ENCODE measurements at regions of chr15 and their contacts with region 1.

Region 1: DNA sequence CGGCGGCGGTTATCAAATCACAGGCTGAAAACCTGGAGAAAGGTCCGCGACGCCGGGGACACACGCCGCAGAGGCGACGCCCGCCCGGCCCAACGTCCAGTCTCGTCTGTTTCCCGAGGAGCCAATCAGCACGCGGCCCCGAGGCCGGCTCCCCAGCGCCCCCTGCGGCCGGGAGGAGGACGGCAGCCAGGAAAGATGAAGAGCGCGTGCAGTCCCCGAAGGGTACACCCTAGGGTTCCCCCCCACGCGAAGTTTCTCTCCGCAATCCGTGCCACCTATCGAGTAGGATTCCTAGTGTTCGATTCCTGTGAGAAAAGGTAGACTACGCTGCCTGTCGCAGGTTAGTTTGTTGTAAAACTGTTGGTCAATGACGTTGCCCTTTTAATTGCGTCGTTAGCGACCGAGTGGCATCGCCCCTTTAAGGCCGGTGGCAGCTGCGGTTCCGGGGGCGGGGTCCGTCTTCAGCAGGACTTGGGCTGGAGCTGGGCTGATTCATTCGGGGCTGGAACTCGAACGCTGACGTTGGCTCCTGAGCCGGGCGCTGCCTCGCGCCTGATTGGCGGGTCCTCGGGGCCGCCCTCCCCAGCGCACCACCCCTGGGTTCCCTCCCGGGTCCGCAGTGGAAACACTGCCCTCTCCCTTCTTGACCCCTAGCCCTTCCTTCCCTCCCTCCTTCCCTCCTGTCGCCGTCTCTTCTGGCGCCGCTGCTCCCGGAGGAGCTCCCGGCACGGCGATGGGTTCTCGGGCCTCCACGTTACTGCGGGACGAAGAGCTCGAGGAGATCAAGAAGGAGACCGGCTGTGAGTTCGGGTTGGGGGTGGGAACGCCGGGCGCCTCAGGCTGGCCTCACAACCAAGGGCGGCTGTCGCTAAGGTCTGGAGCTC is at the starts of genes CHP1 and EXD1:
- DNase-seq: peak; percentile 93
- ATAC-seq: peak; percentile 98
- H3K4me3 Mint-ChIP-seq: peak within 1 kb of the TSS; percentile 91
- H3K27ac Mint-ChIP-seq: peak within 1 kb of the TSS; percentile 81
- H3K4me1 Mint-ChIP-seq: peaks cover 28% of the 10 kb centered on the region
- H3K27me3 Mint-ChIP-seq: no peaks in the 10 kb centered on the region
- CTCF ChIP-seq: peak; percentile 99
- total RNA-seq, gene CHP1: 47.9 and 58.5 TPM in 2 replicates
- total RNA-seq, gene EXD1: not detected in 2 replicates

Region 2: DNA sequence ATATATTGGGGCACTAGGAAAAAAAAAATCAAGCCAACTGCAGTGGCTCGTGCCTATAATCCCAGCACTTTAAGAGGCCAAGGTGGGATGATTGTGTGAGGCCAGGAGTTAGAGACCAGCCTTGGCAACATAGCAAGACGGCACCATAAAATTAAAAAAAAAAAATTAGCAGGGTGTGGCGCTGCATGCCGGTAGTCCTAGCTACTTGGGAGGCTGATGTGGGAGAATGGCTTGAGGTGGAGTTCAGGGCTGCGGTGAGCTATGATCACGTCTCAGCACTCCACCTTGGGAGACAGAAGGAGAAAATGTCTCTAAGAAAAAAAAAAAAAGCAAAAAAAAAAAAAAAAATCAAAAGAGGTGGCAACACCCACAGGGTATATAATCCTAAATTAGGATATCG is 164.4 kb before region 1 on chr15:
- CTCF ChIA-PET with region 1: no interaction called
- POLR2A ChIA-PET with region 1: interaction called, 11 read pairs
- intact Hi-C with region 1: no loop called
- DNase-seq: no peak
- ATAC-seq: no peak
- H3K4me3 Mint-ChIP-seq: no peak overlapping the region
- H3K27ac Mint-ChIP-seq: no peak overlapping the region
- H3K4me1 Mint-ChIP-seq: no peaks in the 10 kb centered on the region
- H3K27me3 Mint-ChIP-seq: no peaks in the 10 kb centered on the region
- CTCF ChIP-seq: no peak

Region 3: GRCh38 chr15:41283653-41284426 is 52.9 kb after region 1 on chr15:
- CTCF ChIA-PET with region 1: interaction called, 6 read pairs
- POLR2A ChIA-PET with region 1: interaction called, 30 read pairs
- intact Hi-C with region 1: loop called (anchors 1 kb)
- DNase-seq: peak; percentile 94
- ATAC-seq: peak; percentile 98
- H3K4me3 Mint-ChIP-seq: peak overlapping the region; percentile 93
- H3K27ac Mint-ChIP-seq: peak overlapping the region; percentile 94
- H3K4me1 Mint-ChIP-seq: peaks cover 42% of the 10 kb centered on the region
- H3K27me3 Mint-ChIP-seq: no peaks in the 10 kb centered on the region
- CTCF ChIP-seq: no peak

Region 4: DNA sequence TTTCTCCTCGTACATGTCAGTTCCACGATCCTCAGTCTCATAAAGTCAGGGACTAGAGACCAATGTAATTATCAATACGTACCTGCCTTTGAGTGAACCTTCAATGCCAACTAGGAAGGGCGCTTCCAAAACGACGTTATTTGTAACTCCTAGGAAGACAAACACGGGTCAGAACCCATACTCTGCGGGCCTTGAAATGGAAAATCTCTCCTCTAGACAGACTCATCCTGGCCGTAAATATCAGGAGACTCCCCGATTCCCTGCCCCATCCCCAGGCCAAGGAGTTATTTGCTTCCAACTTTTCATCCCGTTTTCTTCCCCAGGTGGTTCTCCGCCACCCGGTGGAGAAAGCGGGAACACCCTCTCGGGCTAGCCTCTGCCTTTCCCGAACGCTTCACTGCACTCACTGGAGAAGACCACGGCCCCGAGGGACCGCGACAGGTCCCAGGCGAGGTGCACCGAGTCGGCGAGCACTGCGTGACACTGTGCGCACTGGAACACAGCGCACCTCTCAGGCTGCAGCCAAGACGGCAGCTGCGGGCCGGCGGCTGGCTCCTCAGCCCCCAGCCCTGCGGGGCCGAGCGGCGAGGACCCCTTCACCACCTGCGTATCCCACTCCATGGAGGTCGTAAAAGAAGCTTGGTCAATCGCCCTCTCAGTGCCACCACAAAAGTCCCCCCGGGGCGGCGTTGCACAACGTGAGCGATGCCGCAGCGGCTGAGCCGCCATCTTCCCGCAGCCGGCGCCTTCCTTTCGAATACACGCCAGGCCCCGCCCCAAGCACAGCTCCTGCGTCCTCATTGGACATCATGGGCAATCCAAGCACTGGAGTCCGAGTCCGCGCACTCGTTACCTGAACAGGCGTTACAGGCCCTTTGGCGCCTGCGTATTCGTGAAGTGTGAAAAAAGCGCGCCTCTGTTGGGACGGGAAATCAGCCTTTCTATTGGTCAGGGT is 101.2 kb after region 1 on chr15 and contains the start of gene OIP5:
- CTCF ChIA-PET with region 1: interaction called, 6 read pairs
- POLR2A ChIA-PET with region 1: interaction called, 24 read pairs
- intact Hi-C with region 1: loop called (anchors 1 kb)
- DNase-seq: peak; percentile 88
- ATAC-seq: peak; percentile 94
- H3K4me3 Mint-ChIP-seq: peak within 1 kb of the TSS; percentile 100
- H3K27ac Mint-ChIP-seq: peak within 1 kb of the TSS; percentile 97
- H3K4me1 Mint-ChIP-seq: peaks cover 31% of the 10 kb centered on the region
- H3K27me3 Mint-ChIP-seq: no peaks in the 10 kb centered on the region
- CTCF ChIP-seq: no peak
- total RNA-seq, gene OIP5: 0.62 and 1.4 TPM in 2 replicates

Region 5: DNA sequence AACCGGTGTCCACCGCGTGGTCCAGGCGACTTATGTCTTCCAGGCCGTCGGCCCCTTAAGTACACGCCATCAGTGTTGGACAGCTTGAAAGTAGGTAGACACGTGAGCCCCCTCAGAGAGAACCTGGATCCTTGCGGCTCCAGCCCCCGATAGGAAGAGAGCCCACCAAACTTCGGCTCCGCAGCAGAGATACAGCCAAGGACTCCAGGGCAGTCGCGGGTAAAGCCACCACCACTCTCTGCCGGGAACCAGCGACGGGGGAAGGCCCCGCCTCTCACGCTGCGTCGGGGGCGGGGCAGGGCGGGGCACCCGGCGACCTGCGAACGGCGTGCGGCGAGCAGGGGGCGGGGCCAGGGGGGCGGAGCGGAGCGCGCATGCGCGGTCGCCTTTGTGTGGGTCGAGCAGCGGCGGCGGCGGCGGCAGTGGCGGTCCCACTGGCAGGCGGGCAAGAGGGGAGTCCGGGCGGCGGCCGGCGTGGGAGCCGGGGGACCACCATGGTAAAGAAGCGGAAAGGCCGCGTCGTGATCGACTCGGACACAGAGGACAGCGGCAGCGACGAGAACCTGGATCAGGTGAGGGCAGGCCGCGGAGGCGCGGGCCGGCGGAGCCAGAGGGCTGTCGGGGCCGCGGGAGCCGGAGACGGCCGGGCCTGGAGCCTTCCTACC is 186.0 kb after region 1 on chr15 and contains the start of gene RTF1:
- CTCF ChIA-PET with region 1: no interaction called
- POLR2A ChIA-PET with region 1: interaction called, 3 read pairs
- intact Hi-C with region 1: loop called (anchors 1 kb)
- DNase-seq: peak; percentile 100
- ATAC-seq: peak; percentile 96
- H3K4me3 Mint-ChIP-seq: peak within 1 kb of the TSS; percentile 95
- H3K27ac Mint-ChIP-seq: peak within 1 kb of the TSS; percentile 92
- H3K4me1 Mint-ChIP-seq: peaks cover 43% of the 10 kb centered on the region
- H3K27me3 Mint-ChIP-seq: no peaks in the 10 kb centered on the region
- CTCF ChIP-seq: no peak
- total RNA-seq, gene RTF1: 37.2 and 38.0 TPM in 2 replicates

Measured in activated B cell treated with CpG ODN at 0.5 μM for 24 hours (primary cell).